Caki2 (cell line): ENCODE measurements at regions of chr20 and their contacts with region 1.

Region 1: DNA sequence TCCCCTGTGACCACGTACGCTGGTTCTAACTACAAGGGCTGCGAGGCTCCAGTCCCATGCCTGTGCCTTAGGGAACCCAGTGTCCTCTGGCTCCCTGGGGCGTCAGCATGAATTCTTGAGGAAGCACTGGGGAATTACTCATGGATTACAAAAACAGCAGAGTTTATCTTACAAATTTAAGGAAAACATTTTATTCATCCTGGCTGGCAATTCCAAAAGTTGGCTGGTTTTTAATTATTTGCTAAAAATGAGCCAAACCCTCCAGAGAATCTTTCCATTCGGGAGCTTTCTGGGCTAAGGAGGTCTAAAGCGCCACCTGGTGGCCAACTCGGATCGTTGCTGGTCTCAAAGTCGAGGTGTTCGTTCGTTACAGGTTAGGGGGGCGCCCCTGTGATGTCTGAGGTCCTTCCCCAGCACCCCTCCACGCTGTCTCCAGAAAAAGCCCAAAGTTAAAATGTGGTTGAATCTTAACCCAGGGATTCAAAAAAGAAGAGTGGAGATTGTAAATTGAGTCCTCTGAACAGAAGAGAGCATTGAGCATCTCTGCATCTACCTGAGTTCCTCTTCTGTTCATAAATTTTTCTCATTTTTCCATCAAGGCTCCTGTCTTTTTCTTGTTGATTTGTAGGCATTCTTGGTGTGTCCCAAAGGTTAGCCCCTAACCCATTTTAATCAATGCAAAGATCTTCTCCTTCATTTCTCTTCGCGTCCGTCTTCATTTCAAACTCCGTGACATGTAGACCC is 99.4 kb downstream of the BFSP1 start:
- DNase-seq: peak; percentile 71

Region 2: DNA sequence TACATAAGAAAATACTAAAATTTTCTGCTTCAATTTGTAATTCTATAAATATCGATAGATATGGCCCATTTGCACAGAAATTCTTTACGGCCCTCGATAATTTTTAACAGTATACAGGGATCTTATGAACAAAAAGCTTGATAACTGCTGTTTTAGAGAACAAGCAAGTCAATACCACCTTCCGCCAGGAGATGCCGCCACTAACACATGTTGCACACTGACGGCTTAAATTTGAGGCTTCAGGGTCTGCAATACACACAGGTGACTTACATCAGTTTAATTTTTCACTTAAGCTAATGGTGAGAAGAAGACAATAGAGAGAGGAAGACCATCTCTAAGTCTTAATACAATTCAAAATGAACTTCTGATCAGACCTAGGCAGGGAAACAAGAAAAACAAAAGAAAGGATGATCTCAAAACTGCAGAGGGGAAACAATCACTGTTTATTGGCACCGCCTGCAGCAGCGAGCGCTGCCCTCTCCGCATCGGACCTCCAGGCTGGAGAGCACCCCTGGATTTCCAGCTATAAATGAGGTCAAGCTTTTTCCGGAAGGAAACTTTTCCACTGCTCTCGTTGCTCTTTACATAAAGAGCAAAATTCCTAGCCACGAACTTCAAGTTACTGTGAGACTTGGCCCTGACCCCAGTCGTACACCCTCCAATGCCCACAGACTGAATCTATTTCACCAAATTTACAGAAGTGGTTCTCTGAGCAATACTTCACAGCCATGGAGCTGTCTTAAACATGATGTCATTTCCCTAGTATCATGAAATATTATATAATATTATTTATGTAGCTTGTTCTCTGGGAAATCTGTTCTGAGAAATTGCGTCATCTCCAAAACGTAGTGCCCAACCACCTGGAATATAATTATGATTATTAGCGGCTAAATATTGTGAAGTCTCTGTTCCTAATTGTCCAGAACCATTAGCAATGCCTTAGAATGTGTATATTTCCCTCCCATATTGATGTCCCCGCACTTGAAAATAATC is 629.6 kb before region 1 on chr20:
- in situ Hi-C with region 1: loop called (anchors 25 kb)
- DNase-seq: no peak

Region 3: DNA sequence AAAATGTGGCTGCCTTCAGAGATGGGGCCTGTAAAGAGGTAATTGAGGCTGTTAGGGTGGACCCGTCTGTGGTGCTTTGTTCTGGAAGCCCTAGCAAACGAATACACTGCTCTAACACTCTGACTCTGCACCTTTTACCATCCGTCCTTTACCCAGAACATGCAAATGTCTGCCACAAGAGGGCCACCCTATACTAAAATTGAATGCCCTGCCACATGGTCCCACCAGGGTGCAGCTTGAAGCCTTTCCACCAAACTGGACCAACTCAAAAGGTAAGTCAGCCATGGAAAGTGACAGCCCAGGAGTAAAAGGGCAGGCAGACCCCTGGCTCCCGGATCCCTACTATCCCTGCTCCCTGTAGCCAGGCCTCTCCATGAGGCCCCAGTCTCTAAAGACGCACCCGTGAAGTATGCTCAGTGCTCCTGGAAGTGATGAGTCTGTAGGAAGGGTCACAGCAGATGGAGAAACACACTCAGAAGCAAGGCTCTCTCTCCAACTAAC is 105.2 kb after region 1 on chr20:
- in situ Hi-C with region 1: no loop called
- DNase-seq: peak; percentile 87